Ovary (tissue), 10 donors: ENCODE measurements at regions of chr12 and their contacts with region 1.

Region 1: GRCh38 chr12:57377103-57377840 is 53.6 kb downstream of the R3HDM2 start:
- DNase-seq: no peak
- H3K4me3 ChIP-seq: no peak overlapping the region
- H3K27ac ChIP-seq: no peak overlapping the region
- H3K4me1 ChIP-seq: no peaks in the 10 kb centered on the region
- H3K27me3 ChIP-seq: no peaks in the 10 kb centered on the region
- CTCF ChIP-seq: no peak
- EP300 ChIP-seq: no peak
- POLR2A ChIP-seq: no peak

Region 2: DNA sequence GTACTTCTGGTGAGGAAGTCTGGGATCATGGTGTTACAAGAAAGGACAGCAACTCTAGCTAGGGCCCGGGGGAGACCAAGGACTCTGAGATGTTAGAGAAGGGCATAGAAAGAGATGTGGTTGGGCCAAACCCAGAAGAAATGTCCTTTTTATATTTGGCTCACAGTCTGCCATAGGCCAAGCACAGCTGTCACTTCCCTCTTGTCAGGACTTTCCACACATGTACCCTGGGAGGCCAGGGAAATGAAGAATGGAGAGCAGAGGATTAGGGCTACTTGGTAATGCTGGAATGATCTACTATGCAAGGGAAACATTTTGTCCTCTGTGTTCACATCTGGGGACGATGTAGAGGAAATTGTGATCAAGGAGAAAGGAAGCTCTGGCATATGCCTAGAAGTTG is 336.5 kb before region 1 on chr12:
- intact Hi-C with region 1: loop called in 1 of 4 experiments (anchors 5 kb)
- DNase-seq: no peak
- H3K4me3 ChIP-seq: no peak overlapping the region
- H3K27ac ChIP-seq: no peak overlapping the region
- H3K4me1 ChIP-seq: no peaks in the 10 kb centered on the region
- H3K27me3 ChIP-seq: no peaks in the 10 kb centered on the region
- CTCF ChIP-seq: no peak
- EP300 ChIP-seq: no peak
- POLR2A ChIP-seq: no peak

Region 3: GRCh38 chr12:57319678-57320469 is 57.4 kb before region 1 on chr12:
- intact Hi-C with region 1: no loop called
- DNase-seq: no peak
- H3K4me3 ChIP-seq: no peak overlapping the region
- H3K27ac ChIP-seq: no peak overlapping the region
- H3K4me1 ChIP-seq: no peaks in the 10 kb centered on the region
- H3K27me3 ChIP-seq: no peaks in the 10 kb centered on the region
- CTCF ChIP-seq: no peak
- EP300 ChIP-seq: no peak
- POLR2A ChIP-seq: no peak

Region 4: GRCh38 chr12:58148405-58148804 is 771.1 kb after region 1 on chr12:
- intact Hi-C with region 1: no loop called
- DNase-seq: no peak
- H3K4me3 ChIP-seq: no peak overlapping the region
- H3K27ac ChIP-seq: no peak overlapping the region
- H3K4me1 ChIP-seq: no peaks in the 10 kb centered on the region
- H3K27me3 ChIP-seq: no peaks in the 10 kb centered on the region
- CTCF ChIP-seq: no peak
- EP300 ChIP-seq: no peak
- POLR2A ChIP-seq: no peak